SK-N-SH (cell line): ENCODE measurements at regions of chr1 and their contacts with region 1.

Region 1: DNA sequence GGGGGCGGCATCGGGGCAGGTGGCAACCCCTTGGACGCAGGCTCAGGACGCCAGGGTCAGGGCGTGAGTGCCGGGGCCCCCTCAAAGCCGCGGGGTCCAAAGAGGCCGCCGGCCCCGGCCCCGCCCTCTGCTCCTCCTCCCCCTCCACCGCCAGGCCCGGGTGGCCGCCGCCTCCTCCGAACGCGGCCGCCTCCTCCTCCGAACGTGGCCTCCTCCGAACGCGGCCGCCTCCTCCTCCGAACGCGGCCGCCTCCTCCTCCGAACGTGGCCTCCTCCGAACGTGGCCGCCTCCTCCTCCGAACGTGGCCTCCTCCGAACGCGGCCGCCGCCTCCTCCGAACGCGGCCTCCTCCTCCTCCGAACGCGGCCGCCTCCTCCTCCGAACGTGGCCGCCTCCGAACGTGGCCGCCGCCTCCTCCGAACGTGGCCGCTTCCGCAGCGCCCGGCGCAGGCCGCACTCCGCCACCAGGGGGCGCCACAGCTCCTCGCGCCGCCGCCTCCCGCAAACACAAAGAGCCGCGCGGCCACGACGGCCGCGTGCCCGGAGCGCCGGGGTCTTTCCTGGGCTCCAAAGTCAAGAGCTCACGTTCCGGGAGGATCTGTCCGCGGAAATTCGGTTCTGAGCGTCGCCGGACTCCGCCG is 19.3 kb upstream of the SAMD11 start:
- DNase-seq: peak; percentile 93
- H3K4me3 ChIP-seq: peak overlapping the region; percentile 42 to 44; a peak in 3 of 4 replicates
- H3K27ac ChIP-seq: no peak overlapping the region; a peak in 1 of 4 replicates
- H3K4me1 ChIP-seq: peaks cover 0 to 18% of the 10 kb centered on the region in 2 experiments; a peak in 1 of 4 replicates
- H3K27me3 ChIP-seq: no peaks in the 10 kb centered on the region
- CTCF ChIP-seq: peak; percentile 62
- EP300 ChIP-seq: no peak
- RAD21 ChIP-seq: peak; percentile 82

Region 2: DNA sequence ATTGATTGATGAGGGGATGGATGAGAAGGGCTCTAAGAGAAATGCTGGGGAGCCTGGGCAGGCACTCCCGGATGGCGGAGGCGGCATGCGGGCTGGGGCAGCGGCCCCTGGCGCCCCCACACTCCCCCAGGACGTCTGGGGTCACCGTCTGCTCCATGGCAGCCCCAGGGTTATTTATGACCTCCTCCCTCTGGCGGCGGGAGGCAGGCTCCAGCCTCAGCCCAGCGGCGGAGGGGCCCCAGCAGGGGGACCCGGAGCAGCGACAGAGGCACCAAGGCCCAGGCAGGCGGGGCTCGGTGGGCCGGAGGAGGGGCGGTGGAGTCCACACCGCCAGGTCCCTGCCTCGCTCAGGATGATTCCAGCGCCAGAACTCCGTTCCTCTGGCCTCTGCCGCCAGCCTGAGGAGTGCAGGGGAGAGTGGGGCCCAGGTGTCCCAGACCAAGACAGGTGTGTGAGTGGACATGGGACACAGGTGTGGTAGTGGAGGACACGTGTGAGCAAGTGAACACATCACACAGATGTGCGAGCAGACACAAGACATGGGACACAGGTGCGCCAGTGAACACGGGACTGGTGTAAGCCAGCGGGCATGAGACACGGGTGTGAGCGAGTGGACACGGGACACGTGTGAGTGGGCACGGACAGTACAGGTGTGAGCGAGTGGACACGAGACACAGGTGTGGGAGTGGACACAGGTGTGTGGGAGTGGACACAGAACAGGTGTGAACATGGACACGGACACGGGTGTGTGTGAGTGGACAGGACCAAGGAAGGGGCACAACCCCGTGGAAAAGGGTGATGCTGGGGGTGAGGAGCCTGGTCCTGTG is 16.8 kb after region 1 on chr1:
- CTCF ChIA-PET with region 1: interaction called, 52 read pairs
- POLR2A ChIA-PET with region 1: interaction called, 8 read pairs
- DNase-seq: peak; percentile 92
- H3K4me3 ChIP-seq: peak overlapping the region; percentile 9 to 24; a peak in 2 of 4 replicates
- H3K27ac ChIP-seq: peak overlapping the region in 1 of 2 experiments; percentile 55; a peak in 2 of 4 replicates
- H3K4me1 ChIP-seq: peaks cover 8 to 68% of the 10 kb centered on the region in 2 experiments; a peak in 2 of 4 replicates
- H3K27me3 ChIP-seq: no peaks in the 10 kb centered on the region
- CTCF ChIP-seq: peak; percentile 38
- EP300 ChIP-seq: peak; percentile 46 to 64; a peak in 3 of 4 replicates
- RAD21 ChIP-seq: peak; percentile 2; the same call in 1 of the 2 replicates

Region 3: GRCh38 chr1:932776-933602 is 28.6 kb after region 1 on chr1:
- CTCF ChIA-PET with region 1: interaction called, 125 read pairs
- POLR2A ChIA-PET with region 1: interaction called, 5 read pairs
- DNase-seq: no peak
- H3K4me3 ChIP-seq: no peak overlapping the region
- H3K27ac ChIP-seq: no peak overlapping the region
- H3K4me1 ChIP-seq: peaks cover 0 to 12% of the 10 kb centered on the region in 2 experiments; a peak in 1 of 4 replicates
- H3K27me3 ChIP-seq: no peaks in the 10 kb centered on the region
- CTCF ChIP-seq: no peak
- EP300 ChIP-seq: no peak
- RAD21 ChIP-seq: no peak

Region 4: GRCh38 chr1:951364-951763 is 46.9 kb after region 1 on chr1:
- CTCF ChIA-PET with region 1: interaction called, 12 read pairs
- POLR2A ChIA-PET with region 1: no interaction called
- DNase-seq: no peak
- H3K4me3 ChIP-seq: no peak overlapping the region
- H3K27ac ChIP-seq: no peak overlapping the region
- H3K4me1 ChIP-seq: no peaks in the 10 kb centered on the region
- H3K27me3 ChIP-seq: no peaks in the 10 kb centered on the region
- CTCF ChIP-seq: peak; percentile 48
- EP300 ChIP-seq: no peak
- RAD21 ChIP-seq: peak; percentile 31; the same call in 1 of the 2 replicates

Region 5: DNA sequence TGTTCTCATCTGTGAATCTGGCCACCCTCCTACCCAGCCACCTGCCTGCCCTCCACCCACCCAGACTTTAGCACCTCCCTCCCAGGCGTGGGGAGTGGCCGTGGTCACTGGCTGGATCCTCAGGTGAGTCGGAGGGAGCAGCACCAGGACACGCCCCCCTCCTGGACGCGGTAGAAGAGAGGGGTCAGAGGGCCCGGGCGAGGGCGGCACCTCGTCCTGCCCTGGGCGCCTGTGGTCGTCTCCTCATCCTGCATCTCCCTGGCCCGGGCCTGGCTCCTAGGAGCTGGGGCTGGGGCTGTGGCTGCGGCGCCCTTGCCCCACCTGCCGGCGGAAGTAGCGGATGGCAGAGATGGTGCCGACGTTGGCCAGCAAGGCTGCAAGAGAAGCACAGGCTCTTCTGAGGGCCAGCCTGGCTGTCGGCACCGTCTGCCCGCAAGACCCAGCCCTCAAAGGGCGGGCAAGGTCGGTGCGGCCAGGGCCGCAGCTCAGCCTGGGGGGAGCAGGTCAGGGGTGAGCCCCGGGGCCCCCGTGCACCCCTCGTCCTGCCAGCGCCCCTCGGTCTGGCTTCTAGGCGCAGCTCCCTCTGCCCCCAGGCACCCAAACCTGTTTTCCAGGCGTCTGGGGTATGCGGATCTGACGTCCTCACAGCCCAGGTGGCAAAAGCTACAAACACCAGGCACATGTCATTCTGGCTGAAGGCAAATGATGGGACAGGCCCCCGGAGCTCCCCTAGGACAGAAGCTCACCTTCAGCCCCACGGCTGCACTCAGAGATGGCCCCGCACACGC is 71.7 kb after region 1 on chr1:
- CTCF ChIA-PET with region 1: interaction called, 24 read pairs
- POLR2A ChIA-PET with region 1: interaction called, 6 read pairs
- DNase-seq: peak; percentile 92
- H3K4me3 ChIP-seq: peak overlapping the region; percentile 59 to 73
- H3K27ac ChIP-seq: peak overlapping the region in 1 of 2 experiments; percentile 58; a peak in 1 of 4 replicates
- H3K4me1 ChIP-seq: peaks cover 0 to 19% of the 10 kb centered on the region in 2 experiments; a peak in 1 of 4 replicates
- H3K27me3 ChIP-seq: no peaks in the 10 kb centered on the region
- CTCF ChIP-seq: peak; percentile 43
- EP300 ChIP-seq: no peak
- RAD21 ChIP-seq: peak; percentile 72

Region 6: DNA sequence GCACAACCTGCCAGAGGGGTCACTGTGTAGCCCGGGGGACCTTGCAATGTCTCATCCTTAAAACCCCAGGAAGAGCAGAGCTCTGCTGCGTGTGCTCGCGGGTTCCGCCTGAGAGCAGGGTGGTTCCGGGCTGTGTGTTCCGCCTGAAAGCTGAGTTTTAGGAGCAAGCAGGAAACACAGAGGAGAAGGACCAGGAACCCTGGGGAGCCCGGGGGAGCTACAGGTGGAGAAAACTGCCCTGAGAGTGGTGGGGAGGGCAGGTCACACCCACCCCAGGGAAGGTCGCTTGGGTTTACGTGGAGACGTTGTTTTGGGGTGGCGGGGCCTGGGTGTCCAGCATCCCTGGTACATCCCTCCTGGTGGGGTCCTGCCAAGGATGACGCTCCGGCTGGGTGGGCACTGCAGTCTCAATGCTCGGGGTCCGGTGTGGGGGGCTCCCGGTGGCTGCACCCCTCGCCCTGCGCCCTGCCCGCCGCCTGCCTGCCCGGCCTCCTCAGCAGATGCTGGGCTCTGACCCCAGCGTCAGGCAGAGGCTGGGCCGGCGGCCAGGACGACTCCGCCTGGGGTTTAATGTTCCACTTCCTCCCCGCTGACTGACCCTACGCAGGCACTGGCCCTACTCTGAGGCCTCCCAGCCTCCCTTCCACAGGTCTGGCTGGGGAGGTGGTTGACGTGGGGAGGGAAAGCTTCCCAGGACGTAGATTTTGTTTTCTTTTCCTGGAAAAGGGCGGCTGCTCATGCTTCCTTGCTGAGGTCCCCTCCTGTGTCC is 228.7 kb after region 1 on chr1:
- CTCF ChIA-PET with region 1: no interaction called
- POLR2A ChIA-PET with region 1: no interaction called
- DNase-seq: no peak
- H3K4me3 ChIP-seq: no peak overlapping the region
- H3K27ac ChIP-seq: no peak overlapping the region
- H3K4me1 ChIP-seq: no peaks in the 10 kb centered on the region
- H3K27me3 ChIP-seq: no peaks in the 10 kb centered on the region
- CTCF ChIP-seq: no peak
- EP300 ChIP-seq: no peak
- RAD21 ChIP-seq: no peak

Region 7: GRCh38 chr1:1567891-1568291 is 663.5 kb after region 1 on chr1:
- CTCF ChIA-PET with region 1: no interaction called
- POLR2A ChIA-PET with region 1: no interaction called
- DNase-seq: no peak
- H3K4me3 ChIP-seq: no peak overlapping the region
- H3K27ac ChIP-seq: no peak overlapping the region
- H3K4me1 ChIP-seq: no peaks in the 10 kb centered on the region
- H3K27me3 ChIP-seq: no peaks in the 10 kb centered on the region
- CTCF ChIP-seq: no peak
- EP300 ChIP-seq: no peak
- RAD21 ChIP-seq: no peak